Testis (tissue), 5 donors: ENCODE measurements at regions of chr12 and their contacts with region 1.

Region 1: DNA sequence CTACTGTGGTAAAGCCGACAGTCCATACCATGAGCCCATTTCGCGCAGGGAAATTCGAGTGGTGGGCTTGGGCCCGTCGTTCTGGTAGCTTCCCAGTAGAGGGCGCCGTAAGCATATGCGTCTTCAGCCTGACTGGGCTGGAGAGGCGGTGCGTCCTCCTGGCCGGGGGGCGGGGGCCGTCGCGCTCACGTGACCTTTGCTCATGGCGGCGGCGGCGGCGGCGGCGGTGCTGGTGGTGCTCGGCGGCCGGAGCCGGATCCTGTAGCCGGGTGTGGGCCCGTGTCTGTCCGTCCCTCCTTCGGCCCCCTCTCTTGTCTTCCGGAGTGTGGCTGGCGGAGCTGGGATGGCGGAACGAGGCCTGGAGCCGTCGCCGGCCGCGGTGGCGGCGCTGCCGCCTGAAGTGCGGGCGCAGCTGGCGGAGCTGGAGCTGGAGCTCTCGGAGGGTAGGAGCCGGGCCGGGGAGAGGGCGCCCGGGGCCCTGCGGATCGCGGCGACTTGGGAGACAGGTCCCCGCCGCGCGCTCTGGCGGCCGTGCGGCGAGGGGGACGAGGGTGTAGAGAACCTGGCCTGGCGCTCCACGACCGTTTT is at the start of gene DIP2B:
- DNase-seq: peak; percentile 97
- H3K4me3 ChIP-seq: peak within 1 kb of the TSS; percentile 89 to 90
- H3K27ac ChIP-seq: peak within 1 kb of the TSS; percentile 97 to 98
- H3K4me1 ChIP-seq: peaks cover 21% of the 10 kb centered on the region
- H3K27me3 ChIP-seq: no peaks in the 10 kb centered on the region
- CTCF ChIP-seq: peak; percentile 97 to 99 (median 98)
- POLR2A ChIP-seq: no peak
- total RNA-seq, gene DIP2B: 43.5 to 57.1 TPM

Region 2: DNA sequence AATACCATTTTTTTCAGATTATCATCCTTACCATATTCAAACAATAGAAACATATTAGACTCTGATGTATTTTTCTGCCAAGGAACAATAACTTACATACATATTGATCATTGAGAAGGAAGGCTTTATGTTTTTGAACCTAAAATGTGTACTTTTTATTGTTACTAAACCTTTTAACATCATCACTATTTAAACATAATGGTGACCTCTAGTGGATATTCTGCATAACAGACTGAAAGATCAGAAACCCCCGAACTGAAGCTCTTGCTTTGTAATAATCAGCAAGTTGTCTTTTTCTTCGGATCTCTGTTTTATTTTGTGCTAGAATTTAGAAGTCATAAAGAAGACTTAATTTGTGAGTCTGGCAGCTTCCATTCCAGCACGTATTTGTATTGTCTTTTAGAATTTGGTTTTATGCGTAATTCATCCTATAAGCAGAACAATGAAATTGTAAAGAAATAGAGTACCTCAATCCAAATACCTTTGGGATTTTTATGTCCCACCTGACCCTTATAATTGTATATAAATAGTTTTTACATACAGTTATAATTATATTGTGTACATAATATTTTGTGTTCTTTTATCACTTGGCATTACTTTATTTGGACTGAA is 133.1 kb after region 1 on chr12:
- intact Hi-C with region 1: loop called (anchors 5 kb)
- DNase-seq: no peak
- H3K4me3 ChIP-seq: no peak overlapping the region
- H3K27ac ChIP-seq: no peak overlapping the region
- H3K4me1 ChIP-seq: no peaks in the 10 kb centered on the region
- H3K27me3 ChIP-seq: no peaks in the 10 kb centered on the region
- CTCF ChIP-seq: peak; percentile 44 to 52 (median 50)
- POLR2A ChIP-seq: no peak